ENCODE measurements at regions of chr10 and their contacts with region 1.

Region 1: DNA sequence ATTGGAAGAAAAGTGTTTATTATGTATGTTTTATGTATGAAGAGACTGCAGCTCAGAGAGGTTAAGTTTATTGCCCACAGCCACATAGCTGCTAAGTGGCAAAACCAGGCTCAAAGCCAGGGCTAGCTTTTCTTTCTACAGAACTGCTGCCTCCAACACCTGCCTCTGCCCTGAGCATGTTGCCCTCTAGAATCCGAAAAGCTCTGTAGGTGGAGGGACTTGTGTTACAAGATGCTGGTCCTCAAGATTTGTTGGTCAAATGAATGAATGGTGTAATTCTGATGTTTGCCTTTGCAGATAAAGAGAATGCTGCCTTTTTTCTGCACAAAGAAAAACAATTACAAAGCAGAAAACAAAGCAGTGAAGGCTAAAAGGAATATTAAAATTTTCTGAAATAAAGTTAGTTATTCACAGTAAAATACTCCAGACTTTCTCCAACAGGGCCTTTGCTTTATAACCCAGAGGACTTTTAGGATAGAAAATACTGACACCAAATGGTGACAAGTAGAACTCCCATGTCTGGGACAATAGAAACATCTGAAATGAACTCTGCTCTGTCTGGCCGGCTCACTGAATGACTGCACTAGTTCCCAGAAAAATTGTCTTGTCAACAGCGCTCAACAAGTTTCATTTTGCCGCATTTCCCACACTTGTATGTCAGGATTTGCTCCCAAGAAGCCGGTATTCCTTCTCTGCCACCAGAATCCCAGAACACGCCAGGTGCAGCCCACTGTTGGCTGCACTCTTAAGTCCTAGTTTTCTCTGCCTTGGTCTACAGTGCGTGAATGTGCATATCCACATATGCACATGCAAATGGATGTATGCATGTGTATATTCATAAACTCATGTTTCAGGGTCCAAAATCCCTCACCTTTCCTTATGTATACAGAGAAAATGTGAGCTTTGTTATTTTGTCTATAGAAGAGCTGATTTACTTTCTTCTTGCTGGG is 11.0 kb upstream of the DNTT start:
- DNase-seq: peak in 1 of 2 donors; percentile 75
- H3K4me3 ChIP-seq: no peak overlapping the region
- H3K27ac ChIP-seq: no peak overlapping the region
- H3K4me1 ChIP-seq: peaks cover 0 to 4% (median 3%) of the 10 kb centered on the region in 4 donors
- H3K27me3 ChIP-seq: peaks cover 0 to 4% (median 0%) of the 10 kb centered on the region in 3 donors
- CTCF ChIP-seq: peak in 5 of 7 experiments; percentile 46 to 70 (median 52)
- EP300 ChIP-seq: no peak
- POLR2A ChIP-seq: no peak

Region 2: DNA sequence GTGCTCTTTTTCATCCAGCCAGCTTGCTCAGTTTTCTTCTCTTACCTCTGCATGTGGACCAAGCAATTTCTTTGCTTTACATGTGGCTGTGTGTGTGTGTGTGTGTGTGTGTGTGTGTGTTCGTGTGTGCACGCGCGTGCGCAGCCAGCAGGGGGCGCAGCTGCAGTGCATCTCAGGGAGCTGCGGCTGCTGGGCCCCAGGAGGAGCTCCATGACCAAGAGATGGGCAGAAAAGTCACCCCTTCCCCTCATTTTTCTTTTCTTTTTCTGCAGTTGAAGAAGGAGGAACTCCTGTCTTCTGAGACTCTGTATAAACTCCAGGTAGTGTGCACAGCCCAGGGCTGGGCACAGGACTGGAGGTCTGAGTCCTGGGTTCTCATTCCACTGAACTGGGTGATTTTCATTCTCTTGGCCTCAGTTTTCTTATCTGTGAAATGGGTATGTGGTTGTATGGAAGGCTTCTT is 63.6 kb before region 1 on chr10:
- intact Hi-C with region 1: loop called (anchors 5 kb)
- DNase-seq: peak; percentile 87 to 92
- H3K4me3 ChIP-seq: no peak overlapping the region
- H3K27ac ChIP-seq: no peak overlapping the region
- H3K4me1 ChIP-seq: no peaks in the 10 kb centered on the region
- H3K27me3 ChIP-seq: no peaks in the 10 kb centered on the region
- CTCF ChIP-seq: peak in 6 of 7 experiments; percentile 82 to 99 (median 86)
- EP300 ChIP-seq: no peak
- POLR2A ChIP-seq: no peak

Region 3: GRCh38 chr10:96431211-96431970 is 138.1 kb after region 1 on chr10:
- intact Hi-C with region 1: no loop called
- DNase-seq: no peak
- H3K4me3 ChIP-seq: no peak overlapping the region
- H3K27ac ChIP-seq: no peak overlapping the region
- H3K4me1 ChIP-seq: no peaks in the 10 kb centered on the region
- H3K27me3 ChIP-seq: peaks cover 0 to 17% (median 0%) of the 10 kb centered on the region in 3 donors
- CTCF ChIP-seq: no peak
- EP300 ChIP-seq: no peak
- POLR2A ChIP-seq: no peak